Right ventricle myocardium superior (tissue), 1 donor: ENCODE measurements at regions of chr6 and their contacts with region 1.

Region 1: GRCh38 chr6:70369332-70369950 is 43.9 kb upstream of the FAM135A start:
- DNase-seq: peak; percentile 53
- ATAC-seq: peak; percentile 86

Region 2: GRCh38 chr6:70142034-70142433 is 227.4 kb before region 1 on chr6:
- intact Hi-C with region 1: no loop called
- DNase-seq: no peak
- ATAC-seq: no peak

Region 3: DNA sequence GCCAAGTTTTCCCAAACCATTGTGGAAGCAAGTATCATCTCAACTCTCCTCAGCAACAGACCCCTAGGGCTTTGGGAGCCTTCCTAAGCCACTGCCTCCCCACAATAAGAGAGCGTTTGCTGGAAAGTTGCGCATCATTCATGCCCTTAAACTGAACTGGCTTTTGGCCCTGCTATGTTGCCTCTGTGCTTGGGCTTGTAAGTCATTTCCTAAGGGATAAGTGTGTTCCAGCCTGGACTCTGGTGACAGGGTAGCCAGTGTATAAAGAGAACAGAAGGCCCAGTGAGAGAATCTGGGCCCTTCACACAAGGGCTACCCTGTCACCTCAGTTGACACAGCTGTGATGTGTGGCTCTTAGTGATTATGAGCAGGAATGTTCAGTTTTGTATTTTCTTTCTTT is 144.4 kb before region 1 on chr6:
- intact Hi-C with region 1: loop called (anchors 5 kb)
- DNase-seq: no peak
- ATAC-seq: peak; percentile 61

Region 4: DNA sequence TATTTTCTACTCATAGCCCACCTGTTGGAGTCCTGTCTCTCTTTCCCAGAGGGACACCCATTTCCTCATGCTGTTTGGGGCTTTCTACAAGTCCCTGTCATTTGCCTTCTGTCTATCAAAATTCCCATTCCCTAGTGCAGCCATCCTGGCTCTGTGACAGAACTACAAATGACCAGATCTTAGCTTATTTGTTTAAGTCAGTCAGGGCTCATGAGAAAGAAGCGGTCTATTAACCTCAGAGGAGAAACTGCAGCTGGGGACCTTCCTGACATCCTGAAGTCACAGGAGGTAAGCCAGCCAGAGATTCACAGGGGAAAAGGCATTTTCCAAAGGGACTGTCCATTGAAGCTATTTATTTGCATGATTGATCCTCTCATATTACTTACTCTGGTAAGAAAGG is 64.8 kb before region 1 on chr6:
- intact Hi-C with region 1: loop called (anchors 10 kb)
- DNase-seq: no peak
- ATAC-seq: no peak

Region 5: DNA sequence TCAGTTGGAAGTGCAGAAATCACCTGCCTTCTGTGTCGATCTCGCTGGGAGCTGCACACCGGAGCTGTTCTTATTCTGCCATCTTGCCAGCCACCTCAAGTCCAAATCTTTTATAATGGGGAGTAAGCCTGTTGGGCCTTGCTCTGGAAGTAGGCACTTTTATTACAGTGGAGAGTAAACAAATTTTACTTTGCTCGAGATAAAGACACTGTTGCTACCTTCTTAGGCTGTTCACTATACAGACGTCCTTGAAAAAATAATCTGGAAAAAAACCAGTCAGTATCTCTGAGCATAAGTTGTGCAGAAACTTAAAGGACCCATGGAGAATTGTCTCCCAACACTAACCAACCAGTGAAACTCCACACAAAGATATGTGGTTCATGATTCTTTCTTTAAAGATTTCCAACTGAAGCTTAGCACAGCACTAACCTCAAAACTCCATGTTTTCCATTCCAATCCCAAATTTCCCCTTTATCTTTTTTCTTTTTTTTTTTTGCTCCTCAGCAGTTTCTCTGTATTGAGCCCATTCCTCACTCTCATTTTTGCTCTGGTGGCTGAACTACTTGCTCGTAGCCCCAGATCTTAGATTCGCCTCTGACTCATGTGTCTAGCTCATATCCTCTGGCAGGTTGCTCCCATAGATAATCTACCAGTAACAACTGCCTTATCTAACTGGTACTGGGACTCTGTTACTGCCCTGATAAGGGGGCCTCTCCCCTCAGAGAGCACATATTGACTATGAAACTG is 32.3 kb before region 1 on chr6:
- intact Hi-C with region 1: no loop called
- DNase-seq: no peak
- ATAC-seq: no peak

Region 6: GRCh38 chr6:71012866-71013469 is 643.5 kb after region 1 on chr6:
- intact Hi-C with region 1: loop called (anchors 5 kb)
- DNase-seq: no peak
- ATAC-seq: peak; percentile 74